CD8-positive, alpha-beta T cell (primary cell): ENCODE measurements at regions of chr12 and their contacts with region 1.

Region 1: DNA sequence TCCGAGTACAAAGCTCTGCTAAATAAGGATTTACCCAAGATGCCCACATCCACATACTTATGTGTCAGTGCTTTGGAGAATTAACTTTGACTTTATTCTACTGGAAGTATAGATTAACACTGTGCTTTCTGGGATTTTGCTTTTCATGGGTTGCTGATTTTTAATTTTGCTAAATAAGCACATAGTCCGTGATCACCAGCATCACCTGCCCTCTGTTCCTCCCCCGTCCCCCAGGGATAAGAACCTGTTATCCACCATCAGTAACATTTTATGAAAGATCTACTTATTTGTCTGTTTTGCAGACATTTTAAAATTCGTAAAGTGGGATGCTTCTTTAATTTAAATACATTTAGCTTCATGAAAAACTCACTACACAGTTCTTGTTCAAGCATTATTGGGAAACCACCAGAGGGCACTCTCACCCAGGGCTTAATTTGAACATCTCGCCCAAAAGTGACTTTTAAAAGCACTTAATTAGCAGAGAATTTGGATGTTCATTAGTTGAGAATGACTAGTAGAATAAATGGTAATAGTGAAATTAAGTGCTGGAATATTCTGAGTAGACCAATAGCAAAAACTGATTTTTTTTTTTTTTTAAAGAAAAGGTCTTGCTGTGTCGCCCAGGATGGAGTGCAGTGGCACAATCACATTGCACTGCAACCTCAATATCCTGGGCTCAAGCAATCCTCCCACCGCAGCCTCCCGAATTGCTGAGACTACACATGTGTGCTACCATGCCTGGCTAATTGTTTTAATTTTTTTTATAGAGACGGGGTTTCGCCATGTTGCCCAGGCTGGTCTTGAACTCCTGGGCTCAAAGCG is 35.7 kb downstream of the MRPL42 start:
- DNase-seq: peak; percentile 34 to 72 (median 64)
- ATAC-seq: peak; percentile 36
- H3K4me3 ChIP-seq: no peak overlapping the region
- H3K4me3 Mint-ChIP-seq: no peak overlapping the region
- H3K27ac ChIP-seq: no peak overlapping the region
- H3K27ac Mint-ChIP-seq: no peak overlapping the region
- H3K4me1 ChIP-seq: no peaks in the 10 kb centered on the region
- H3K4me1 Mint-ChIP-seq: no peaks in the 10 kb centered on the region
- H3K27me3 ChIP-seq: no peaks in the 10 kb centered on the region
- H3K27me3 Mint-ChIP-seq: no peaks in the 10 kb centered on the region
- CTCF ChIP-seq: peak; percentile 95

Region 2: GRCh38 chr12:93467351-93468007 is 35.5 kb before region 1 on chr12 and contains the start of gene MRPL42:
- CTCF ChIA-PET with region 1: no interaction called
- POLR2A ChIA-PET with region 1: no interaction called
- intact Hi-C with region 1: no loop called
- DNase-seq: peak; percentile 88 to 96 (median 91)
- ATAC-seq: peak; percentile 94
- H3K4me3 ChIP-seq: peak within 1 kb of the TSS; percentile 64 to 95
- H3K4me3 Mint-ChIP-seq: peak within 1 kb of the TSS; percentile 93
- H3K27ac ChIP-seq: peak within 1 kb of the TSS; percentile 81 to 88
- H3K27ac Mint-ChIP-seq: peak within 1 kb of the TSS; percentile 95
- H3K4me1 ChIP-seq: peaks cover 15% of the 10 kb centered on the region
- H3K4me1 Mint-ChIP-seq: peaks cover 34% of the 10 kb centered on the region
- H3K27me3 ChIP-seq: no peaks in the 10 kb centered on the region
- H3K27me3 Mint-ChIP-seq: no peaks in the 10 kb centered on the region
- CTCF ChIP-seq: peak; percentile 71
- total RNA-seq, gene MRPL42: 31.6 to 33.2 TPM

Region 3: GRCh38 chr12:93541578-93542225 is 38.7 kb after region 1 on chr12:
- CTCF ChIA-PET with region 1: no interaction called
- POLR2A ChIA-PET with region 1: no interaction called
- intact Hi-C with region 1: no loop called
- DNase-seq: no peak
- ATAC-seq: no peak
- H3K4me3 ChIP-seq: no peak overlapping the region
- H3K4me3 Mint-ChIP-seq: no peak overlapping the region
- H3K27ac ChIP-seq: no peak overlapping the region
- H3K27ac Mint-ChIP-seq: no peak overlapping the region
- H3K4me1 ChIP-seq: peaks cover 7% of the 10 kb centered on the region
- H3K4me1 Mint-ChIP-seq: peaks cover 9% of the 10 kb centered on the region
- H3K27me3 ChIP-seq: no peaks in the 10 kb centered on the region
- H3K27me3 Mint-ChIP-seq: no peaks in the 10 kb centered on the region
- CTCF ChIP-seq: no peak

Region 4: GRCh38 chr12:93742110-93742934 is 239.3 kb after region 1 on chr12:
- CTCF ChIA-PET with region 1: interaction called, 3 read pairs
- POLR2A ChIA-PET with region 1: no interaction called
- intact Hi-C with region 1: loop called (anchors 2 kb)
- DNase-seq: peak; percentile 10 to 72 (median 45)
- ATAC-seq: peak; percentile 87
- H3K4me3 ChIP-seq: peak overlapping the region; percentile 56 to 76
- H3K4me3 Mint-ChIP-seq: peak overlapping the region; percentile 91
- H3K27ac ChIP-seq: peak overlapping the region; percentile 34 to 47
- H3K27ac Mint-ChIP-seq: peak overlapping the region; percentile 79
- H3K4me1 ChIP-seq: peaks cover 8% of the 10 kb centered on the region
- H3K4me1 Mint-ChIP-seq: peaks cover 28% of the 10 kb centered on the region
- H3K27me3 ChIP-seq: no peaks in the 10 kb centered on the region
- H3K27me3 Mint-ChIP-seq: no peaks in the 10 kb centered on the region
- CTCF ChIP-seq: no peak

Region 5: DNA sequence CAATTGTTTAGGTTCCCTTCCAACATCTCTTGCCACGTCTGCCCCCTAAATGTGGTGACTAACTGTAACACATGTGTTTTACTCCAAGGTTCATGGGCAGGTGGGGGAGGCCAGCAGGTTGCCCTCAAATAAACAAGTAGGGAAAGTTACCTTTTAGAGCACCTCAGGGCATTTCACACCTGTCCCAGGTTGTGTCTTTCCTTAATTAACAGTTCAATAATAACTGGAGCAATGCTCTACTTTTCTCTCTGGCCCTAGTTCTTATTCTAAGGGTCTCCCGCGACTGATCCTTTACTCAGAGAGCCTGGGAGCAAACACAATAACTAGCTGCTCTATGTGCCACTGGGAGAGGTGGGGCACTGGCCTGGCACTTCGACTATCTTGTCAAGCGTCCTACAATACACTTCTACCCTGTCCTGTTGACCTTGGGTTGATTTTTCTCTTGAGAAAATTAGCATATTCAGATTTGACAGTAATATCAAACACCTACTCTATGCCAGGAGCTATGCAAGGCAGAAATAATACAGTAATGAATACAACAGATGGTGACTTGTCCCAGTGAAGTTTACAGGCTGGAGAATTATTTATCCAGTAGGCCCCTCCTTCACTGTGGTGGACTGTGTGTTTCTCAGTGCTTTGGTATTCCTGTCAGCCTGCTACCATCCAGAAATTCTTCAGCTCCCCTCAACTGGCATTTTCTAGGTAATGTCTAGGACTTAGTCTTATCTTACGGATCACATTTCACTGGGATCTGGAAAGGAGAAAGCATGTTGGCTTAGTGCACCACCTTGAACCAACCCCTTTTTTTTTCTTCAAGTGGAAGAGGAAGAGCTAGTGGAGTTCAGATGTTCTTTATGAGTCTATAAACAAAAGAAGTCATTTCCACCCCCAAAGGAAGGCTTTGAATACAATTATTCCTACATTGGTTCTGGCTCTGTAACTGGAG is 376.7 kb after region 1 on chr12:
- CTCF ChIA-PET with region 1: no interaction called
- POLR2A ChIA-PET with region 1: no interaction called
- intact Hi-C with region 1: no loop called
- DNase-seq: no peak
- ATAC-seq: no peak
- H3K4me3 ChIP-seq: no peak overlapping the region
- H3K4me3 Mint-ChIP-seq: no peak overlapping the region
- H3K27ac ChIP-seq: no peak overlapping the region
- H3K27ac Mint-ChIP-seq: no peak overlapping the region
- H3K4me1 ChIP-seq: no peaks in the 10 kb centered on the region
- H3K4me1 Mint-ChIP-seq: no peaks in the 10 kb centered on the region
- H3K27me3 ChIP-seq: no peaks in the 10 kb centered on the region
- H3K27me3 Mint-ChIP-seq: no peaks in the 10 kb centered on the region
- CTCF ChIP-seq: no peak

Region 6: GRCh38 chr12:93979189-93979588 is 476.2 kb after region 1 on chr12:
- CTCF ChIA-PET with region 1: interaction called, 9 read pairs
- POLR2A ChIA-PET with region 1: no interaction called
- intact Hi-C with region 1: loop called (anchors 1 to 2 kb)
- DNase-seq: peak in 4 of 9 experiments; percentile 3 to 54 (median 32)
- ATAC-seq: no peak
- H3K4me3 ChIP-seq: no peak overlapping the region
- H3K4me3 Mint-ChIP-seq: no peak overlapping the region
- H3K27ac ChIP-seq: no peak overlapping the region
- H3K27ac Mint-ChIP-seq: no peak overlapping the region
- H3K4me1 ChIP-seq: no peaks in the 10 kb centered on the region
- H3K4me1 Mint-ChIP-seq: peaks cover 7% of the 10 kb centered on the region
- H3K27me3 ChIP-seq: no peaks in the 10 kb centered on the region
- H3K27me3 Mint-ChIP-seq: no peaks in the 10 kb centered on the region
- CTCF ChIP-seq: peak; percentile 28

Region 7: DNA sequence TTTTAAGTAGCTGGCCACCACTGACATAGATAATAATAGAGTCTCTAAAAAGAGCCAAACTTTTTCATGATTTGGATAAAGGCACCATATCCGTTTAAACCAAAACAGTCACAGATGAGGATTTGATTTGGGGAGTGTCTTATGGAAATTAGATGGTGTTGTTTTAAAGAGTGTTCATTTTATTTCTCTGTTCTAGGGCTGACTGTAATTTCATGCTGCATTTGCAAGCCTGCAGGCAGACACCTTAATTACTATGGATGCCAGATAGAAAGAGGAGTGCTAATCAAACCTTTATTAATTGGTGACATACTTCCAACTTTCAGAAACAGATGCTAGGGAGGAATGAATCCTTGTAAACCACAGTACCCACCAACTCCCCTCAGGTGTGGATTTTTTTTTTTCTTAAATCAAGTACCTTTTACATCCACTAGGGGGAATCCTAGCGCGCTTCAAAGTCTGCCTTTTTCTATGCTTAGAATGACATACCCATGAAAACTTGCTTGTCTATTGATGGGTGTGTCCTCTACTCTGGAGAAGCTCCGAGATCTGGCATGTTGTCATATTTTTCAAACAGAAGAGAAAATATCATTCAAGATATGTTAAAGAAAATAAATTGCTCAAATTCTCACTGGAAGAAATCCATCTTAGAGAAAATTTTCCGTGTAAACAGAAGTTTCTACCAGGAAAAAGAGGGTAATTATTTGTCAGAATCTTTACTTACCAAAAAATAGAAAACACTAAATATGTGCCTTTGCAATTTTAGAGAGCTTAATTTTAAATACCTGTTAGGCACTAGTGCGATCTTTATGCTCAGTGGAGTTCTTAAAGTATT is 631.2 kb after region 1 on chr12:
- CTCF ChIA-PET with region 1: no interaction called
- POLR2A ChIA-PET with region 1: no interaction called
- intact Hi-C with region 1: no loop called
- DNase-seq: peak in 5 of 9 experiments; percentile 9 to 75 (median 39)
- ATAC-seq: peak; percentile 100
- H3K4me3 ChIP-seq: no peak overlapping the region
- H3K4me3 Mint-ChIP-seq: no peak overlapping the region
- H3K27ac ChIP-seq: no peak overlapping the region
- H3K27ac Mint-ChIP-seq: no peak overlapping the region
- H3K4me1 ChIP-seq: no peaks in the 10 kb centered on the region
- H3K4me1 Mint-ChIP-seq: peaks cover 3% of the 10 kb centered on the region
- H3K27me3 ChIP-seq: no peaks in the 10 kb centered on the region
- H3K27me3 Mint-ChIP-seq: no peaks in the 10 kb centered on the region
- CTCF ChIP-seq: peak; percentile 77